Heart left ventricle (tissue), 16 donors: ENCODE measurements at regions of chr4 and their contacts with region 1.

Region 1: GRCh38 chr4:54373718-54374210 is 144.7 kb downstream of the PDGFRA start:
- DNase-seq: no peak
- ATAC-seq: no peak
- H3K4me3 ChIP-seq: no peak overlapping the region
- H3K27ac ChIP-seq: no peak overlapping the region
- H3K4me1 ChIP-seq: peaks cover 0 to 5% (median under 1%) of the 10 kb centered on the region in 12 donors
- H3K27me3 ChIP-seq: peaks cover 0 to 3% (median 0%) of the 10 kb centered on the region in 9 donors
- CTCF ChIP-seq: no peak
- POLR2A ChIP-seq: no peak

Region 2: DNA sequence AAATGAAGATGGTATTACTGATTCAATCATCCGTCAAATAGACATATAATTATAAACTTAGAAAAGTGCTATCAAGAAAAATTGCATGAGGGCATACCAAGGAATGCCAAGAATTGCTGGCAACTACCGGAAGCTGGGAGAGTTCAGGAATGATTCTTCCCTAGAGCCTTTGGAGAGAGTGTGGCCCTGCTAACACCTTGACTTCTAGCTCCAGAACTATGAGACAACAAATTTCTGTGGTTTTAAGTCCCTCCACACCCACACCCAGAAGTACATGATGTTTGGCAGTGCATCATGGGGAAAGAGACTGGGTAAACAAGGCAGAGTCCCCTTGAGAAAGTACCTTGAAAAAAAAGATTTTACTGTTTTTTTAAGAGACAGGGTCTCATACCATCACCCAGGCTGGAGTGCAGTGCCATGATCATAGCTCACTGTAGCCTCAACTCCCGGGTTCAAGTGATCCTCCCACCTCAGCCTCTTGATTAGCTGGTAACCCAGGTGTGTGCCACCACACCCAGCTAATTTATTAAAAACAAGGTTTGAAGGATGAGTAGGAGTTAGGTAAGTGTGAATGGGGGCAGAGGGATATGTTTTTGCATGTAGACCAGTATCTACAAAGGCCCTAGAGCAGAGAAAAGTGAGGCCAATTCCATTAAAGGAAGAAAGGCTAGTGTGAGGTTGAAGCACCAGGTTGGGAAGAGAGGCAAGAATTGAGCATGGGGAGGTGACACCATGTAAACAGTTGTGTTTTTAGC is 220.7 kb before region 1 on chr4:
- intact Hi-C with region 1: no loop called
- DNase-seq: no peak
- ATAC-seq: no peak
- H3K4me3 ChIP-seq: no peak overlapping the region
- H3K27ac ChIP-seq: no peak overlapping the region
- H3K4me1 ChIP-seq: no peaks in the 10 kb centered on the region
- H3K27me3 ChIP-seq: peaks cover 0 to 5% (median 0%) of the 10 kb centered on the region in 9 donors
- CTCF ChIP-seq: no peak
- POLR2A ChIP-seq: no peak

Region 3: GRCh38 chr4:54359919-54360650 is 13.7 kb before region 1 on chr4:
- intact Hi-C with region 1: loop called in 1 of 10 experiments (anchors 1 kb)
- DNase-seq: no peak
- ATAC-seq: no peak
- H3K4me3 ChIP-seq: no peak overlapping the region
- H3K27ac ChIP-seq: no peak overlapping the region
- H3K4me1 ChIP-seq: no peaks in the 10 kb centered on the region
- H3K27me3 ChIP-seq: no peaks in the 10 kb centered on the region
- CTCF ChIP-seq: no peak
- POLR2A ChIP-seq: no peak

Region 4: GRCh38 chr4:54414545-54414944 is 40.8 kb after region 1 on chr4:
- intact Hi-C with region 1: no loop called
- DNase-seq: no peak
- ATAC-seq: no peak
- H3K4me3 ChIP-seq: no peak overlapping the region
- H3K27ac ChIP-seq: no peak overlapping the region
- H3K4me1 ChIP-seq: peaks cover 0 to 2% (median 0%) of the 10 kb centered on the region in 12 donors
- H3K27me3 ChIP-seq: peaks cover 0 to 2% (median 0%) of the 10 kb centered on the region in 9 donors
- CTCF ChIP-seq: no peak
- POLR2A ChIP-seq: no peak